Activated CD4-positive, alpha-beta T cell treated with anti-CD3 and anti-CD28 coated beads, Interleukin-2, amount 10 ng/mL, durations not matched to agents 24 days and 14 days (primary cell): ENCODE measurements at regions of chr16 and their contacts with region 1.

Region 1: DNA sequence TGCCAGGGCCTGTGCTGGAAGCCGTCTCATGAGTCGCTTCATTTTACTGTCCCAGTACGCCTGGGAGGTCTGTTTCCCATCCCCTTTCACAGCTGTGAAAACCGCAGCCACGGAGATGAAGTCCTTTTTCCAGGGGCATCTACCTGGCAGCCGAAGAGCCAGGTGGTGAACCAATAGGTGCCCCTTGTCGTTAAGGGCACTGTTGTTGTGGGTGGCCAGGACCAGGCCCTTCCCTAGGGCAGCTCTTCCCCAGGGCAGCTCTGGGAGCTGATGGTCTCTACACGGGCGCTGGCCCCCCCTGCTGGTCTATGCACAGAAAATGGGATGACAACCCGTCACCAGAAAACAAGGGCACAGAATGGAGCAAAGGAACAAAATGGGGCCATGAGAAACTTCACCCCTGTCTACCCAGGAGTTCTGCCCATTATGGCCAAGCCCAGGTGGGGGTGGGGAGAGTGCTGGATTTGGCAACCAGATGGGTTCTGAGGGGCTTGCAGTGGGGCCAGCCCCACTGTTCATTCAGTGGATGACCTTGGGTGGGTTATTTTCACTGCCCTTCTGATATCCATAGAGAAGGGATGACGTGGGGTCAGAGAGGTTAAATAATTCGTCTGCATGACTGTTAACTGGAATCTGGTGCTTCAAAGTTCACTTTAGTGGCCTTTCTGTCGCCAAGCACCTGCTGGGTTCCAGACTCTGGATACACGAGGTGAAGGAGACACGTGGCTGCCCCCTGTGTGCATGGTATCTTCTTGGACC is 11.5 kb downstream of the RMI2 start:
- DNase-seq: peak; percentile 85
- H3K4me3 Mint-ChIP-seq: peak overlapping the region; percentile 37
- H3K27ac Mint-ChIP-seq: peak overlapping the region; percentile 20
- H3K4me1 Mint-ChIP-seq: peaks cover 63% of the 10 kb centered on the region
- H3K27me3 Mint-ChIP-seq: peaks cover 13% of the 10 kb centered on the region

Region 2: GRCh38 chr16:11051879-11052808 is 304.6 kb before region 1 on chr16:
- intact Hi-C with region 1: loop called (anchors 2 kb)
- DNase-seq: peak; percentile 93
- H3K4me3 Mint-ChIP-seq: peak overlapping the region; percentile 46
- H3K27ac Mint-ChIP-seq: peak overlapping the region; percentile 89
- H3K4me1 Mint-ChIP-seq: peaks cover 77% of the 10 kb centered on the region
- H3K27me3 Mint-ChIP-seq: no peaks in the 10 kb centered on the region

Region 3: DNA sequence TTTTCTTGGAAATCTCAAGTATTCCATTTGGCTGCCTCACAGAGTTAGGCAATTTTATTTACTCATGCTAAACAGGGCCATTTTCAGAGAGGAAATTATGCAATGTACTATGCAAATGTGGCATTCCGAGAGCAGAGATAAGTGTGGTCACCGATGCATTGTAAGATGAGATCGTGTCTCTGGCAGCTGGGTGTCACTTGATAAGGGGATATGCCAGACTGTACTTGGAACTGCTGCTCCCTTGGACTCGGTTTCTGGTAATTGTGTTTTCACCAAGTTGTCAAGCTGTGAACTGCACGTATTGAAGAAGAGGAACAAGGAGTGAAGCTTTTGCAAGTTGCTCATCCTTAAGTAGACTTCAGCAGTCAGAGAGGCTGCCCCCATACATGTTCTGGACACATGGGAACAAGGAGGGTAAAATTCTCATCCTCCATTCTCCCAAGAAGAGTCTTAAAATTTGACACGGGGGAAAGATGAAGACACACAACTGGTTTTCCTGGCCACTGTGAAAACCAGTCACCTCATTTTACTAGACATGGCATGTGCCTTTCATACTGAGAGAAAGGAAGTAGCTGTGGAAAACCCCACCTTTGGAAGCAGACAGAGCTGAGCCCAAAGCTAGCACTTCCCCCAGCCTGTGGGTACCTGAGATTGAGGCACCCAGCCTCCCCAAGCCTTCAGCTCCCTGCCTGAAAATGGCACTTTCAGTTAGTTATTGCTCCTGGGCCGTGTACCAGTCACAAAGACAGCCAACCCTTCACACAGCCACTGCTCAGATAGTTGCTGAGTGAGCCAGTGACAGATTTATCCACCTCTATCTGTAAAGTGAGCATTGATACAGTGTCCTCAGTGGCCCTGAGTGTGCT is 251.5 kb before region 1 on chr16:
- intact Hi-C with region 1: loop called (anchors 5 kb)
- DNase-seq: peak; percentile 84
- H3K4me3 Mint-ChIP-seq: peak overlapping the region; percentile 73
- H3K27ac Mint-ChIP-seq: peak overlapping the region; percentile 92
- H3K4me1 Mint-ChIP-seq: peaks cover 65% of the 10 kb centered on the region
- H3K27me3 Mint-ChIP-seq: no peaks in the 10 kb centered on the region

Region 4: GRCh38 chr16:11133344-11133943 is 223.3 kb before region 1 on chr16:
- intact Hi-C with region 1: no loop called
- DNase-seq: peak; percentile 67
- H3K4me3 Mint-ChIP-seq: no peak overlapping the region
- H3K27ac Mint-ChIP-seq: peak overlapping the region; percentile 8
- H3K4me1 Mint-ChIP-seq: peaks cover 58% of the 10 kb centered on the region
- H3K27me3 Mint-ChIP-seq: no peaks in the 10 kb centered on the region

Region 5: GRCh38 chr16:11232852-11233726 is 123.7 kb before region 1 on chr16:
- intact Hi-C with region 1: no loop called
- DNase-seq: peak; percentile 98
- H3K4me3 Mint-ChIP-seq: peak overlapping the region; percentile 78
- H3K27ac Mint-ChIP-seq: peak overlapping the region; percentile 98
- H3K4me1 Mint-ChIP-seq: peaks cover 74% of the 10 kb centered on the region
- H3K27me3 Mint-ChIP-seq: no peaks in the 10 kb centered on the region

Region 6: DNA sequence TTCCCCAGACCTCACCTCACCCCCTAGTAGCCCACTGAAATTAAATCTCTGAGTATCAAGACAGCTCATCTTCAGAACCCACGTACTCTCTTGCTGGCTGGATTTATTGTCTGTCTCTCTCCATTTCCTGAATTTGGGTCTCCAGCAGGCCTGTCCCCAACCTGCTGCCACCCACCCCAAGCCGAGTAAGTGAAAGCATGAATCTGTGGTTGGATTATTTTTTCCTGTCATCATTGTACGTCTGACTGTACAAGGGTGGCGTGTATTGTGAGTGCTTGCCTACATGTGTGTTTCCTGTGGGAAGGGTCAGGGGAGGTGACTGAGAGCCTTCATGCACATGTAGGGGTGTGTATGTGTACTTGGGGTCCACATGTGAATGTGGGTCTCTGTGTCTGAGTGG is 93.0 kb before region 1 on chr16:
- intact Hi-C with region 1: loop called (anchors 1 kb)
- DNase-seq: peak; percentile 85
- H3K4me3 Mint-ChIP-seq: peak overlapping the region; percentile 43
- H3K27ac Mint-ChIP-seq: peak overlapping the region; percentile 91
- H3K4me1 Mint-ChIP-seq: peaks cover 40% of the 10 kb centered on the region
- H3K27me3 Mint-ChIP-seq: peaks cover 3% of the 10 kb centered on the region

Region 7: DNA sequence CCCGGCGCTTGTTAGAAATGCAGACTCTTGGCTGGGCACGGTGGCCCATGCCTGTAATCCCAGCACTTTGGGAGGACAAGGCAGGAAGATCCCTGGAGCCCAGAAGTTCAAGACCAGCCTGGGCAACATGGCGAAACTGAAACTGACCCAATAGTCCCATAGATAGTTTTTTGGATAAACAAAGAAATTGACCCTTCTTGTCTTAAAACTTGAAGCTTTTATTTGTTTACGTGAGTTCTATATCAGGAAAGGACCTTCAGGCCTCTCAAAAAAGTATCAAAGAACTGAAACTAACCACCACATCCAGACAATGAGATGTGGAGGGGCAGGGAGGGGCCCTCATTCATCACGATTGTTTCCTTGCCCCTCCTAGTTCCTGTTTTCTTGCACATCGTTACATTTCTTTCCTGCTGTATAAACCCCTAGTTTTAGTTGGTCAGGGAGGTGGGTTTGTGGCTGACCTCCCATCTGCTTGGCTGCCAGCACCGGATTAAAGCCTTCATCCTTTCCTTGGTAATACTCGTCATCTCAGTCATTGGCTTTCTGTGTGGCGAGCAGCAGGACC is 45.7 kb before region 1 on chr16:
- intact Hi-C with region 1: loop called (anchors 1 kb)
- DNase-seq: peak; percentile 91
- H3K4me3 Mint-ChIP-seq: peak overlapping the region; percentile 58
- H3K27ac Mint-ChIP-seq: peak overlapping the region; percentile 85
- H3K4me1 Mint-ChIP-seq: peaks cover 57% of the 10 kb centered on the region
- H3K27me3 Mint-ChIP-seq: no peaks in the 10 kb centered on the region

Region 8: GRCh38 chr16:11345040-11345862 is 11.5 kb before region 1 on chr16 and contains the start of gene RMI2:
- intact Hi-C with region 1: loop called (anchors 1 kb)
- DNase-seq: peak; percentile 99
- H3K4me3 Mint-ChIP-seq: peak within 1 kb of the TSS; percentile 90
- H3K27ac Mint-ChIP-seq: peak within 1 kb of the TSS; percentile 89
- H3K4me1 Mint-ChIP-seq: peaks cover 48% of the 10 kb centered on the region
- H3K27me3 Mint-ChIP-seq: no peaks in the 10 kb centered on the region
- total RNA-seq, gene RMI2: 63.8 and 65.6 TPM in 2 replicates